PC-9 (cell line): ENCODE measurements at regions of chr7 and their contacts with region 1.

Region 1: GRCh38 chr7:137984181-137985041 is 17.5 kb downstream of the CREB3L2 start:
- DNase-seq: no peak
- H3K4me3 ChIP-seq: no peak overlapping the region
- H3K27ac ChIP-seq: no peak overlapping the region
- H3K4me1 ChIP-seq: peaks cover 32% of the 10 kb centered on the region
- H3K27me3 ChIP-seq: no peaks in the 10 kb centered on the region
- CTCF ChIP-seq: no peak

Region 2: GRCh38 chr7:138169441-138169851 is 185.0 kb after region 1 on chr7:
- CTCF ChIA-PET with region 1: no interaction called
- POLR2A ChIA-PET with region 1: interaction called, 14 read pairs
- intact Hi-C with region 1: no loop called
- DNase-seq: peak in 1 of 2 experiments; percentile 10
- H3K4me3 ChIP-seq: no peak overlapping the region
- H3K27ac ChIP-seq: no peak overlapping the region
- H3K4me1 ChIP-seq: no peaks in the 10 kb centered on the region
- H3K27me3 ChIP-seq: no peaks in the 10 kb centered on the region
- CTCF ChIP-seq: no peak